Right cardiac atrium (tissue), 5 donors: ENCODE measurements at regions of chr1 and their contacts with region 1.

Region 1: DNA sequence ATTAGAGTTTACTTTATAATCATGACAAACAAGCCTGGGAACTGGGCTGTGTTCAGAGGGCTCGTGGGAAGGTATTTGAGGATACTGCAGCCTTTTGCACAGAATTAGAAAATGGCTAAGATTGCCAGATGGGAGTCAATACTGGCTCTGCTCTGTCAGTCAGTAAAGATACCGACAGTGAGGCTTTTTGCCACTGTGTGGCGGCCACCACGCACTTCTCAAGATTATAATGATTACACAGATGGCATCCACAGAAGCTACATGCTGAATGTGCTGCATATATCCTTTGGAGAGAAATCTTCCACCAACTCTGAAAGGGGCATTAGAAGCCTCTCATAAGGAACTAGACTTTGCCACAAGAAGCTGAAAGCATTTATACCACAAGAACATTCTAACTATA is 213.4 kb upstream of the PTBP2 start:
- DNase-seq: no peak
- ATAC-seq: no peak
- H3K4me3 ChIP-seq: no peak overlapping the region
- H3K27ac ChIP-seq: no peak overlapping the region
- H3K4me1 ChIP-seq: no peaks in the 10 kb centered on the region
- H3K27me3 ChIP-seq: no peaks in the 10 kb centered on the region

Region 2: GRCh38 chr1:96445302-96445701 is 62.9 kb before region 1 on chr1:
- intact Hi-C with region 1: loop called in 1 of 4 experiments (anchors 5 kb)
- DNase-seq: no peak
- ATAC-seq: no peak
- H3K4me3 ChIP-seq: no peak overlapping the region
- H3K27ac ChIP-seq: no peak overlapping the region
- H3K4me1 ChIP-seq: no peaks in the 10 kb centered on the region
- H3K27me3 ChIP-seq: no peaks in the 10 kb centered on the region